Head of caudate nucleus (tissue), 42 donors: ENCODE measurements at regions of chr7 and their contacts with region 1.

Region 1: GRCh38 chr7:106176414-106177299 is 64.5 kb upstream of the SYPL1 start:
- DNase-seq: peak; percentile 73 to 94 (median 86)

Region 2: GRCh38 chr7:105974471-105974870 is 202.2 kb before region 1 on chr7:
- intact Hi-C with region 1: no loop called
- DNase-seq: no peak

Region 3: DNA sequence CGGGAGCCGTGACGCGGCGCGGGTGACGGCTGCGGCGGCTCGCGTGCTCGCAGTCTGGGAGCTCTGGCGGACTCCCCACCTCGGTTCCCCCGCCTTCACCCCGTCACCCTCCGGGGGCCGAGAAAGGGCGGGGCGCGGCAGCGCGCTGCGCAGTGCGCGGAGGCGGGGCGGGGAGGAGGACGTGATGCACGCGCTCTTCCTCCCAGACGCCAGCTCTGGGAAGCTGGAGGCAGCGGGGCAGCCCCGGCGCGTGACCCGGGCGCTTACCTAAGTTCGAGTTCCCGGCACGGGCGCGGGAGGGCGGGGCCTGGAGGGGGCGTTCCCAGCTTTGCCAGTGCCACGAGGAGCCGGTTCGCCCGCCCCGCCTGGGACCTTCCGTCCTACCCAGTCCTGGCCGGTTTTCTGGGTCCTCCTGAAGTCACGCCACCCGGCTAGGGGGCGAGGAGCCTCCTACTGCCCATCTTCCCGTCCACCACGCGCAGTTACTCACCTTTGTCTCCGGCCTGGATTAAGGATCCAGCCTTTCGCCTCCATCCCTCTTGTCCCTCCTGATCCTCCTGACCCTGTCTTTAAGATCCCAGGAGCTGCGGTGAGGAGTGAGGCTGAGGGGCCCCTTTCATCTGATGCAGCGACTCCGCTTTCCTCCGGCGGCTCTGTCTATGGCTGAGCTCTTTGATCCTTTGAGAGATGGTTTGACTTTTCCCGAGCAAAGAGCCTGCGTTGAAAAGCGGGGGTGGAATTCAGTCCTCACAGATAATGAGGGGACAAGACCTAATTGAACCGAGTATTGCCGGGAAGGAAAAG is 108.6 kb after region 1 on chr7:
- intact Hi-C with region 1: loop called (anchors 10 kb)
- DNase-seq: peak; percentile 86 to 98 (median 95)

Region 4: GRCh38 chr7:106461993-106462859 is 285.6 kb after region 1 on chr7:
- intact Hi-C with region 1: loop called (anchors 2 kb)
- DNase-seq: peak in 8 of 42 donors; percentile 7 to 55 (median 14)